ENCODE measurements at regions of chr10 and their contacts with region 1.

Region 1: DNA sequence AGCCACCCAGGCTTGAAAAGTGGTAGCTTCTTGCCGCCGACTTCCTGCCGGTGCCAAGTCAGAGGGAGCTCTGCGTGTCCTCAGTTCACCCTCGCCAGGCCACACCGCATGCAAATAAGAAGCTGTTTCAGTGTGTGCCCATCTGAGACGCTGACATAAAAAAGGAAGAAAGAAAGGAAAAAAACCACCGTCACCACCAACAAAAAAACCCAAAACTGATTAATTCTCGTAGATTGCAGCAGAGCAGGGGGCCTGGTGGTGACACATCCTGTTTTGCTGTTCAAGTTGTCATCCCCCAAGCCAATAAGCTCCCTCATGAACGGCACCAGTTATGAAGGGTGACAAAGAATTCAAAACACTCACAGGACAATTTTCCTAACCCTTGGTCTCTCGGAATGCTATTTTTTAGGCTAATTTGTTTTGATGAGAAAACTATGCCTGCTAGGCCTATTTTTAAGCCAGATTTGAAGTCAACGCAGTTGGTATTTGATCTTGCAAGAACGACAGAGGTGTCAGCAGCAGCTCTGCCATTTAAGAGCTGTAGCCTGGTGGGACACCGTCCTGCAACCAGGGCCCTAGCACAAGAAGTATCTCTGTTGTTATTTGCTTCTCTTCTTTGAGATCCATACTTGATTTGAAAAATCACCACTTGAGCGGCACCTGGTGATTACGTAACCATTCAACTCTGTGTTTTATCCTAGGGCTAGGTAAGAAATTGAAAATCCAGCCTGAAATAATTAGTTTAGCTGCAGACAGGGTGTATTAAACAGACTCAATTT is 145.6 kb downstream of the PFKFB3 start:
- DNase-seq: peak; percentile 98
- H3K4me3 ChIP-seq: peak overlapping the region; percentile 65
- H3K27ac ChIP-seq: peak overlapping the region; percentile 97
- H3K4me1 ChIP-seq: peaks cover 77% of the 10 kb centered on the region
- CTCF ChIP-seq: no peak

Region 2: DNA sequence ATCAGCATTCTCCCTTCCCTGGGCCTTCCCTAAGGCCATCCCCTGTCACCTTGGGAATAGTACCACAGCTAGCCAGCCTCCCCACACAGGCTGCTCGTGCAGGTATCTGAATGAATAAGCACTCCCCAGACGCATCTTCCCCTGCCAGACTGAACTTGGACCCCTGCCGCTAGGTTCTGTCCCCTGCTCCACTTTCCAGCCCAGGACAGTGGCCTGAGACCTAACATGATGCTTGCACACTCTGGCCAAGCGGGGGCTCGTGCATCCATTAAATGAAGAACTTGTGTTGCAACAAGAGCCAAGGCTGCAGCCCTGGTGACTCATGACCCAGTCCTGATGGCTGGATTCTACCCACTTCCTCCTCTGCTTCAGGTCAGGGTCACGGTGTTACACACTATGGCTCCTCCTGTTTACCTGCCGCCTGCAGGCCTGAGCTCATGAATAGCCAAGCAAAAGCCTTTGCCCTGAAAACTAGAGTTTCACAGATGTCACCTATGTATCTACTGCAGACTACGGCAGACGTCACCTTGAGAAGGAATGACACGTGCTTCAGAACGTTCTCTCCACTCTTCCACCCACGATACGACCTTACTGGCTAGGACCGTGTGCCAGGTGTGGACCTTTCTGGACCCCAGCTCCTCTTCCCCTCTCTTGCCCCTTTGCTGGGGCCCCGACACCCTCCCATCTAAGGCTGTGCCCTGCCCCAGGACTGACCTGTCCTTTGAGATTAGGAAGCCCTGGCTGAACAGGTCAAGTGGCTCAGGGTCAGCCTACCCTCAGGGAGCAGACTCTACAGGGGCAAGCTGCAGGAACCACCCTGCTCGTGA is 688.4 kb before region 1 on chr10:
- CTCF ChIA-PET with region 1: no interaction called
- POLR2A ChIA-PET with region 1: no interaction called
- intact Hi-C with region 1: loop called (anchors 10 kb)
- DNase-seq: peak; percentile 83
- H3K4me3 ChIP-seq: peak overlapping the region; percentile 30
- H3K27ac ChIP-seq: peak overlapping the region; percentile 100
- H3K4me1 ChIP-seq: peaks cover 98% of the 10 kb centered on the region
- CTCF ChIP-seq: no peak

Region 3: DNA sequence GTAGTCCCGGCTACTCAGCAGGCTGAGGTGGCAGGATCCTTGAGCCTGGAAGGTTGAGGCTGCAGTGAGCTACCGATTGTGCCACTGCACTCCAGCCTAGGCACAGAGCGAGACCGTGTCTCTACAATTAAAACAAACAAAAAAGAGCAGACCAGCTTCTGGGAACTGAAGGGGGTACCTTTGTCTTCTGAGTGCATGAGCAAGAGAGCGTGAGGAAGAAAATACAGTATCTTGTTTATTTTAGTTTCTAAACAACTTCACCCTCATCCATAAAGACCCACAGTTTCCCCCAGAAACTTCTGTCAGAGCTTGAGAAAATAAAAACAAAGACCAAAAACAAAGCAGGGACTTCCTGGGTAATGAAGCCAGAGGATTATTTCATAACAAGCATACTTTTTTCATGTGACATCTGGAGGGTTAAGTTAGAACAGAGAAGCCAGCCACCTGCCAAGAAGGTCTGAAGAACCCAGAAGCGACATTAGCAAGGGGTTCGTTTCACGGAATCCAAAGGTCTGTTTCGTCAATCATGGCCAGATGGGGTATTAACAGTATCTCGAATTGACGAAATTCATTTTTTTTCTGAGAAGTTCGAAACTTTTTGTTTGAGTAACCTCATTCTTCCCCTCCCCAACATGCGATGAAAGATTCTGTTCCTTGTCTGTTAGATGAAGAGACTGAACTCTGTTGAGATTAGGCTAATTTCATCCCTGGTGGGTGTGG is 275.9 kb before region 1 on chr10:
- CTCF ChIA-PET with region 1: no interaction called
- POLR2A ChIA-PET with region 1: no interaction called
- intact Hi-C with region 1: no loop called
- DNase-seq: peak; percentile 80
- H3K4me3 ChIP-seq: peak overlapping the region; percentile 23
- H3K27ac ChIP-seq: peak overlapping the region; percentile 98
- H3K4me1 ChIP-seq: peaks cover 59% of the 10 kb centered on the region
- CTCF ChIP-seq: no peak

Region 4: GRCh38 chr10:6300106-6300783 is 48.0 kb before region 1 on chr10:
- CTCF ChIA-PET with region 1: interaction called, 4 read pairs
- POLR2A ChIA-PET with region 1: interaction called, 46 read pairs
- intact Hi-C with region 1: loop called (anchors 1 kb)
- DNase-seq: peak; percentile 89
- H3K4me3 ChIP-seq: peak overlapping the region; percentile 54
- H3K27ac ChIP-seq: peak overlapping the region; percentile 93
- H3K4me1 ChIP-seq: peaks cover 87% of the 10 kb centered on the region
- CTCF ChIP-seq: no peak

Region 5: DNA sequence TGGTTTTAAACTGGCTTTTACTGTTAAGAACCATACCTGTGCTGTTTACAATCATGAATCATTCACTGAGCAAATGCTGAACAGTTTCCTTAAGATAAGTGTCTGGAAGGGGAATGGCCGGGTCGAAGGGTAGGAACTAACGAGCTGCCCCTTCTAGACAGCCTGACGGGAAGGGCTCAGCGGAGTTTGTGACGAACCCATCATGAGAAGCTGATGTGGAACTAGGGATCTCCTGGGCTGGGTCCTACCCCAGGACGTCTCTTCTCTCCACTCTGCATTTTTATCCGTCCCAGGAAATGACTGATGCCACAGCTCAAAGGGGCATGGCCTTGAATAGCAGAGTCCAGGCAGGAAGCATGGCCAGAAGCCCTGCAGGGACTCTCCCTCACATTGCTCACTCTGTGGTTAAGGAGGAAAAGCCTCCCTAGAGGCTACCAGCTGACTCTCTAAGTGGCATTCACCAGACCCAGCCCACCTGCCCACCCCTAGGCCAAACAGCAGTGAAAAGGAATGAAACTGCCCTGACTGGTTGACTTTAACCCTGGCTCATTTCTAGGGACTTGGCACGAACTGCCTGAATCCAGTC is 33.6 kb before region 1 on chr10:
- CTCF ChIA-PET with region 1: interaction called, 5 read pairs
- POLR2A ChIA-PET with region 1: interaction called, 83 read pairs
- intact Hi-C with region 1: no loop called
- DNase-seq: no peak
- H3K4me3 ChIP-seq: no peak overlapping the region
- H3K27ac ChIP-seq: no peak overlapping the region
- H3K4me1 ChIP-seq: peaks cover 76% of the 10 kb centered on the region
- CTCF ChIP-seq: no peak

Region 6: GRCh38 chr10:6328699-6329423 is 19.4 kb before region 1 on chr10:
- CTCF ChIA-PET with region 1: no interaction called
- POLR2A ChIA-PET with region 1: interaction called, 31 read pairs
- intact Hi-C with region 1: no loop called
- DNase-seq: no peak
- H3K4me3 ChIP-seq: peak overlapping the region; percentile 10
- H3K27ac ChIP-seq: peak overlapping the region; percentile 46
- H3K4me1 ChIP-seq: peaks cover 32% of the 10 kb centered on the region
- CTCF ChIP-seq: no peak

Region 7: DNA sequence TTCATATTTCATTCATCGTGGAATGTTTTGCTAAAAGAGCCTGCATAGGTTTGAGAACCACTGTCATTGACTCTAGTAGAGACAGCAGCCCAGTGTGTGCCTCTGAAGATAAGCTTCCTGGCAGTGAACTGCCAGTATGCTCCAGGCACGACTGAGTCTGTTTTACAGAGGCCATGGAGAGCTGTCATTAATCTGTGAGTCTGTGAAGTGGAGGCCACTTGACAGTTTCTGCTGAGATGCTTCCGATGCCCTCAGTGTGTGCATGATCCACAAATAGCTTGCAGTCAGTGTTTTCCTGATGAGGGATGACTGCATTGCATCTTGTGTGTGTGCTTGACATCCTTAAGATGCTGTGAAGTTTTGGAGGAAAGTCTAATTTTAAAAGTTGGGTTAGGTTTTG is 16.6 kb after region 1 on chr10:
- CTCF ChIA-PET with region 1: no interaction called
- POLR2A ChIA-PET with region 1: interaction called, 13 read pairs
- intact Hi-C with region 1: no loop called
- DNase-seq: no peak
- H3K4me3 ChIP-seq: no peak overlapping the region
- H3K27ac ChIP-seq: no peak overlapping the region
- H3K4me1 ChIP-seq: no peaks in the 10 kb centered on the region
- CTCF ChIP-seq: no peak

Region 8: GRCh38 chr10:6401562-6402348 is 53.5 kb after region 1 on chr10:
- CTCF ChIA-PET with region 1: interaction called, 8 read pairs
- POLR2A ChIA-PET with region 1: interaction called, 8 read pairs
- intact Hi-C with region 1: loop called (anchors 1 kb)
- DNase-seq: peak; percentile 88
- H3K4me3 ChIP-seq: peak overlapping the region; percentile 29
- H3K27ac ChIP-seq: no peak overlapping the region
- H3K4me1 ChIP-seq: peaks cover 40% of the 10 kb centered on the region
- CTCF ChIP-seq: peak; percentile 90